IMR-90 (cell line): ENCODE measurements at regions of chr3 and their contacts with region 1.

Region 1: GRCh38 chr3:85821130-85821756 is 862.5 kb downstream of the CADM2 start:
- DNase-seq: no peak
- ATAC-seq: no peak
- H3K4me3 ChIP-seq: no peak overlapping the region
- H3K27ac ChIP-seq: no peak overlapping the region
- H3K4me1 ChIP-seq: no peaks in the 10 kb centered on the region
- H3K27me3 ChIP-seq: no peaks in the 10 kb centered on the region
- CTCF ChIP-seq: peak; percentile 22; the same call in 1 of the 2 replicates
- POLR2A ChIP-seq: no peak
- RAD21 ChIP-seq: no peak

Region 2: GRCh38 chr3:86563400-86563970 is 742.2 kb after region 1 on chr3:
- CTCF ChIA-PET with region 1: no interaction called
- POLR2A ChIA-PET with region 1: no interaction called
- dilution Hi-C with region 1: no loop called
- in situ Hi-C with region 1: loop called (anchors 25 kb)
- intact Hi-C with region 1: loop called (anchors 5 kb)
- DNase-seq: peak; percentile 47
- ATAC-seq: peak; percentile 53
- H3K4me3 ChIP-seq: no peak overlapping the region
- H3K27ac ChIP-seq: no peak overlapping the region
- H3K4me1 ChIP-seq: no peaks in the 10 kb centered on the region
- H3K27me3 ChIP-seq: no peaks in the 10 kb centered on the region
- CTCF ChIP-seq: peak; percentile 66
- POLR2A ChIP-seq: no peak
- RAD21 ChIP-seq: peak; percentile 27